Body of pancreas (tissue), 4 donors: ENCODE measurements at regions of chr5 and their contacts with region 1.

Region 1: GRCh38 chr5:32489791-32490582 is 45.4 kb upstream of the ZFR start:
- DNase-seq: peak; percentile 73 to 81 (median 75)
- ATAC-seq: peak; percentile 56
- H3K4me3 ChIP-seq: no peak overlapping the region
- H3K27ac ChIP-seq: no peak overlapping the region
- H3K4me1 ChIP-seq: peaks cover 5% of the 10 kb centered on the region
- H3K27me3 ChIP-seq: no peaks in the 10 kb centered on the region
- CTCF ChIP-seq: peak; percentile 52 to 67 (median 60)
- POLR2A ChIP-seq: no peak

Region 2: DNA sequence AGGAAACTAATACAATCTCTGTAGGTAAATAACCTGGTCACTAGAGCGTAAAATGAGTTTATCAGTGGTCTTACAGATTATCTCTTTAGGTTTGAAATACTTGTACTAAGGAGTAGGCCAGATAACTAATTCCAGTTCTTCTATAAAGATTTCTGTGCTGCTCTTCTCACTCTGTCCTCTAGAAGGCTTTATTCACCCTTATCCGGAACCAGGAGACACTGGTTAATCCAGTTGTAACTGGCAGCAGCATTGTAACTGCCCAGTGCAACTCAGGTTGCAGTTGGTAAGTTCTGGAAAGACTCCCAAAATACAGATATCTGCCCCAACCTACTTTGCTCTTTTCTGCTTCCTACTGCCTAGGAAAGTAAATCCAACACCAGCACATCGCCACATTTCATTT is 938.1 kb before region 1 on chr5:
- intact Hi-C with region 1: no loop called
- DNase-seq: no peak
- ATAC-seq: no peak
- H3K4me3 ChIP-seq: no peak overlapping the region
- H3K27ac ChIP-seq: no peak overlapping the region
- H3K4me1 ChIP-seq: no peaks in the 10 kb centered on the region
- H3K27me3 ChIP-seq: no peaks in the 10 kb centered on the region
- CTCF ChIP-seq: no peak
- POLR2A ChIP-seq: no peak

Region 3: DNA sequence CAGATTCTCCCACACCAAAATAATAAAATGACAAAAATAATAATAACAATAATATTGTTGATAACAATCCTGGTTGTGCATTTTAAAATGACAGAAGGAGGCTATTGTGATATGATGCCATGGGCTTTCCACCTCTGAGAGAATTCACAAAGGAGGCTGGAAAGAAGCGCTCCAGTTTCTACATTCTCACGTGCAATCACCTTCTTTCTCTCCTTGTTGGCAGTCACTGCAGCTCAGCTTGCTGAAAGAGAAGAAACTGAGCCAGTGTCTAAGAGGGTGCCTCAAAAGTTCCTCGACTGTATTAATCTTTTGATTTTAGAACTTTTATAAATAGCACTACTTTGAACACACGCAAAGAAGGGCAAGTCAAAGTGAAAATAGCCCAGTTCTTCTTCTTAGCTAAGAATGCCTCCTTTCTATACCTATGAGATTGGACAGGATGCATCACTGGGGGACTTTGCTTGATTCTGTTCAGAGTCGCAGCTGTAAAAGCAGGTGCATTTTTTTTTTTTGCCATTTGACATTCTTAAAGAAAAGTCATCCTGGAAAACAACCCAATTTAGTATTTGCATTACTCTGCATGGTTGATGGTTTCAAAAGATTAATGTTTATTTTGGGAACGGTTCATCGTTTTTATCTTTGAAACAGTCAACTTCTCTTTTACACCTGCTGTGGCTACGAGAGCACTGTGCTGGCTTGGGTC is 82.9 kb after region 1 on chr5:
- intact Hi-C with region 1: no loop called
- DNase-seq: no peak
- ATAC-seq: no peak
- H3K4me3 ChIP-seq: no peak overlapping the region
- H3K27ac ChIP-seq: no peak overlapping the region
- H3K4me1 ChIP-seq: no peaks in the 10 kb centered on the region
- H3K27me3 ChIP-seq: no peaks in the 10 kb centered on the region
- CTCF ChIP-seq: no peak
- POLR2A ChIP-seq: no peak

Region 4: DNA sequence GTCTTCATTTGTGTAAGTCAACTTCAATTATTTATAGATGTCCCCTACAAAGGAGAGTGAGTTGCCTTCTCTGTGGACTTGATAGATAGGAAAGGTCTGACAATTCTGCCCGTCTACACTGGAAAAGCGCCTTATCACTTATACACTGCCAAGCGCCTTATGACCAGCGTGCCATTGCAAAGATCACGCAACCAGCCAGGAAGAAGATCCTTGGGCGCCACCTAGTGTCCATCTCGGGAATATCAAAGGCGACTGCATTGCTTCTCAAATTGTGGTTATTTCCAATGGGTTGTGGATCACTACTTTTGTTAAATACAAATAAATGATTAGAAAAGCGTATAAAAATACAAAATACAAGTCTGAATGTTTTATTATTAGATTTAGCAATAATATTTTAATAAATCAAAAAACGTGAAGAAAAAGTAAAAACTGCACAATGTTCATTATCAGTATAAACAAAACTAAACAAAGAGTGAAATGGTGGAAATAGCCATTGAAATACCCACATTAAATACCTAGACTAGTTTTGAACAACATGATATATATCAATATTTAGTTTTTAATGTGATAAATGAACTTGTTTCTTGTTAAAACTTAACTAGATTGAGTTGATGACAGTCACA is 123.2 kb after region 1 on chr5:
- intact Hi-C with region 1: no loop called
- DNase-seq: peak; percentile 78 to 88 (median 84)
- ATAC-seq: peak; percentile 86
- H3K4me3 ChIP-seq: no peak overlapping the region
- H3K27ac ChIP-seq: no peak overlapping the region
- H3K4me1 ChIP-seq: no peaks in the 10 kb centered on the region
- H3K27me3 ChIP-seq: no peaks in the 10 kb centered on the region
- CTCF ChIP-seq: peak; percentile 85 to 96 (median 86)
- POLR2A ChIP-seq: no peak

Region 5: DNA sequence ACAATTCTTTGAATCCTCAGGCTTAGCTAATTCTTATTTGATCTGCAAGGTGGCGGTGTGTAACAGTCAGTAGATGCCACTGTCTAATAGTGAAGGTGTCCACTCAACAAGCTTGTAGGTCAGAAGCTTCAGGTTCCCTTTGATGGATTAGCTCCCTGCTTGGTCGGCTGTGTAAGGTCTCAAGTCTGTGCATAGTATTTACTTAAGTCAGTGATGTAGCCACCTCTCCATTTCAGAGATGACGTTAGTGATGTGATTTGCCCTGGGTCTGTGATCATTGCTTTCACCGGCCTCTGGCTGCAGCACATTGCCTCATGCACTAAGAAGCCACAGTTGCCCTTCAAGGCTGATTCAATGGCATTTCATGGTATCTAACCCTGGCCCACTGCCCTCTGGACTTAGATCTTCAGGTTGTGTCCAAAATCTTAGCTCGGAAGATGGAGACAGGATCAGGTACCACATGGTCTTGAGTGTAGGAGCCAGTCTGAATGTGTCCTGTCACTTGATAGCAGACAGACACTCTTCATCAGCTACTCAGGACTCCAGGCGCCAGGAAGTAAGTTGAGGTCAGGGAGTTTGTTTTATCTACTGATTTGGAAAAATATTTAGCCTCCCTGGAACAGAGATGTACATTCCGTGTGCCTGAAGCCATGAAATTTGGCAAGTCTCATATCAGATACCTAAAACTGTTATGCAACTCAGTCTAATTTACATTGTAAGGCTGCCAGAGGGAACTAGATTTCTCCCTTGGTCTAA is 138.2 kb after region 1 on chr5:
- intact Hi-C with region 1: loop called (anchors 10 kb)
- DNase-seq: no peak
- ATAC-seq: no peak
- H3K4me3 ChIP-seq: no peak overlapping the region
- H3K27ac ChIP-seq: no peak overlapping the region
- H3K4me1 ChIP-seq: no peaks in the 10 kb centered on the region
- H3K27me3 ChIP-seq: no peaks in the 10 kb centered on the region
- CTCF ChIP-seq: no peak
- POLR2A ChIP-seq: no peak